PC-3 (cell line): ENCODE measurements at regions of chr4 and their contacts with region 1.

Region 1: GRCh38 chr4:124334119-124334518 is 378.4 kb downstream of the ANKRD50 start:
- DNase-seq: peak; percentile 83
- ATAC-seq: peak; percentile 94
- H3K4me3 ChIP-seq: 0 out of 2 replicates have a peak overlapping the region, but pooled peaks have one; percentile 2
- H3K27ac ChIP-seq: peak overlapping the region; percentile 1; the same call in 1 of the 2 replicates
- H3K4me1 ChIP-seq: peaks cover 8% of the 10 kb centered on the region; the same call in 1 of the 2 replicates
- H3K27me3 ChIP-seq: no peaks in the 10 kb centered on the region
- CTCF ChIP-seq: peak; percentile 58

Region 2: DNA sequence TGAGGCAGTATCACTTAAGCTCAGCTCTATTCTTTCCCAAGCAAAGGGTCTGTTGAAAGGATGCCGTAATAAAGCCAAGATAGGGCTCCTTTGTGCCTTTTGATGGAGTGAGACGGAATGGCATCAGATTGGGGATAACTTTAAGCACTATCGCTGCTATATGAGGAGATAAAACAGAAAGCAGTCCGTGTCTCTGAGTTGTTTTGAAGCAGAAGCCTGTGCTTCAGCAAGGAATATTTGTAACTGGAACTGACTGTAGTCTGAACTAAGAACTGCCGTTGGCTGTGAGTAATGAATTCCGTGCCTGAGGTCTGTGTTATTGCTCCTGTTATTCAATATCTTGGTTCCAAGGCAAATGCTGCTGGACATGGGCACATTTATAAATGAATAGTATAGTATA is 81.0 kb after region 1 on chr4:
- CTCF ChIA-PET with region 1: no interaction called
- POLR2A ChIA-PET with region 1: no interaction called
- intact Hi-C with region 1: loop called (anchors 5 kb)
- DNase-seq: peak; percentile 8
- ATAC-seq: no peak
- H3K4me3 ChIP-seq: no peak overlapping the region
- H3K27ac ChIP-seq: peak overlapping the region; percentile 96
- H3K4me1 ChIP-seq: peaks cover 49% of the 10 kb centered on the region
- H3K27me3 ChIP-seq: no peaks in the 10 kb centered on the region
- CTCF ChIP-seq: no peak

Region 3: DNA sequence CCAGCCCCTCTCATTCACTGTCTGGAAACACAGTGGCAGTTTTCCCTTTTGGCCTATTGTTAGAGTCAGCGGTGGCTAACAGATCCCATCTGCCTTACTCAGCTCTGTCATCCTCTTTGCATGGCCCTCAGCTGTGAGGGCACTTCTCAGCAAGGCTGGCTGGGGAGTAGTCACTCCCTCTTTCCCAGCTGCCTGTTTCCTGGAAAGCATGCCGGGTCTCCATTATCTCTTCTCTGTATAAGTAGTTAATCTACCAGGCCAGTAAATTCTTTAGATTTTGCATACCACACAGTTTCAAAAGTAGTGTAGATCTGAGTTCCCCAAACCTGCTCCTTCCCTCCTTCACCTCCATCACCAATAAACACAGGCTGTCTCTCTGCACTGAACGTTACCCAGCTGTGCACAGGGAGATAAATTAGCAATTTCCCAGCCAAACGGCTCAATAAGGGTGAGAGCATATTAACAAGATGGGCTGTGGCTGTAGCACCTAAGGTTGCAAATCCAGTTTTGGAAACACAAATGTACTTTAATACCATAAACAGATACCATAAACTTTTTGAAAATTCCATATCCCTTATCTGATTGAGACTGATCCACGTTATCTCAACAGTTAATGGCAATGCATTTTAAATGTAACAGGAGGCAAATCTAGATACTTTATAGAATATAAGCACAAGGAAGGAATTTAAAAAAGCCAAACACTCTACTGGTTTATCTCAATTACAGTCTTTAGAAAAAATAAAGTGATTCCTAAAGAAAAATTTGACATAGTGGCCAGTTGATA is 149.2 kb after region 1 on chr4:
- CTCF ChIA-PET with region 1: interaction called, 3 read pairs
- POLR2A ChIA-PET with region 1: interaction called, 3 read pairs
- intact Hi-C with region 1: loop called (anchors 10 kb)
- DNase-seq: no peak
- ATAC-seq: no peak
- H3K4me3 ChIP-seq: no peak overlapping the region
- H3K27ac ChIP-seq: no peak overlapping the region
- H3K4me1 ChIP-seq: no peaks in the 10 kb centered on the region
- H3K27me3 ChIP-seq: no peaks in the 10 kb centered on the region
- CTCF ChIP-seq: no peak

Region 4: DNA sequence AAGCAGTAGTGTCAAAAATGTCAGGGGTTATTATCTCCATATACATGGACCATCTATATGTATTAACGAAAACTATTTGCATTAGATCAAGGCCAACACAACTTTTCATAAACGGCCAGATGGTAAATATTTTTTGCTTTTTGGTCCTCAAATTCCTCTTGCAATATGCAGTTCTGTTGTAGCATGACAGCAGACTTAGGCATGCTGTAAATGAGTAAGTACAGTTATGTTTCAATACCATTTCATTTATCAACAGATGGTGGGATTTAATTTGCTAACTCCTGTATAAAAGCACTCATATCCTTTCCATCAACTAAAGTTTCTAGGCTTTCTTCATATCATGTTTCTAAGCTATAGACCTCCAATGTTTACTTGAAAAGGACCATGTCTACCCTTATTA is 170.3 kb after region 1 on chr4:
- CTCF ChIA-PET with region 1: no interaction called
- POLR2A ChIA-PET with region 1: no interaction called
- intact Hi-C with region 1: no loop called
- DNase-seq: no peak
- ATAC-seq: no peak
- H3K4me3 ChIP-seq: no peak overlapping the region
- H3K27ac ChIP-seq: no peak overlapping the region
- H3K4me1 ChIP-seq: no peaks in the 10 kb centered on the region
- H3K27me3 ChIP-seq: no peaks in the 10 kb centered on the region
- CTCF ChIP-seq: no peak

Region 5: GRCh38 chr4:124712372-124713184 is 378.5 kb after region 1 on chr4 and contains the start of gene ANKRD50:
- CTCF ChIA-PET with region 1: no interaction called
- POLR2A ChIA-PET with region 1: no interaction called
- intact Hi-C with region 1: loop called (anchors 1 kb)
- DNase-seq: peak; percentile 82
- ATAC-seq: peak; percentile 59
- H3K4me3 ChIP-seq: peak within 1 kb of the TSS; percentile 92
- H3K27ac ChIP-seq: peak within 1 kb of the TSS; percentile 93
- H3K4me1 ChIP-seq: peaks cover 29% of the 10 kb centered on the region
- H3K27me3 ChIP-seq: no peaks in the 10 kb centered on the region
- CTCF ChIP-seq: no peak
- total RNA-seq, gene ANKRD50: 26.3 and 29.3 TPM in 2 replicates

Region 6: DNA sequence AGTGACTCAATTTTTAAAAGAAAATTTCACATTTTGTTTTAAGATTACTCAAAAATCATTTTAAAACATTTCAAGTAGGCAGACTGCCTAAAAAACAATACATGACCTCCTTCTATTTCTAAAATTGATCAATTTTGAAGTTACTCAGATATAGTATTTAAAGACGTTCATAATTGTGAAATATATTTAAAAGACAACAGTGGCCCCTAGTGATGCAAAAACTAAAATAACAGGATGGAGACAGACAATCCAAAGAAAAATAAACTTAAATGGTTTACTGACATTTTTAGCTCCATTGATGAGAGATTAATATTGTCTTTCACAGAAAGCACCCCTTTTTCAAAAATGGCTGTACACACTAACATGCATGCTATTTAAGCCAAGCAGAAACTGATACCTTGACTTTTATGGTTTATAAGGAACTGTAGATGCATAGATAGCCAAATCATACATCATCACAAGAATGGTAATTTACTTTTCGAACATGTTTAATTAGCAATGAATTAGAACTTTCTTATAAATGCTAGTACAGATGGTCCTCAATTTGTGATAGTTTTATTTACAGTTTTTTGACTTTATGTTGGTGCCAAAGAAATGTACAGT is 910.8 kb after region 1 on chr4:
- CTCF ChIA-PET with region 1: no interaction called
- POLR2A ChIA-PET with region 1: no interaction called
- intact Hi-C with region 1: loop called (anchors 1 kb)
- DNase-seq: peak; percentile 46
- ATAC-seq: peak; percentile 40
- H3K4me3 ChIP-seq: no peak overlapping the region; the same call in 1 of the 2 replicates
- H3K27ac ChIP-seq: no peak overlapping the region
- H3K4me1 ChIP-seq: peaks cover 14% of the 10 kb centered on the region
- H3K27me3 ChIP-seq: no peaks in the 10 kb centered on the region
- CTCF ChIP-seq: peak; percentile 67